Colonic mucosa (tissue), 4 donors: ENCODE measurements at regions of chr9 and their contacts with region 1.

Region 1: GRCh38 chr9:20356403-20357035 is 265.8 kb downstream of the MLLT3 start:
- DNase-seq: peak; percentile 77
- H3K4me3 ChIP-seq: no peak overlapping the region
- H3K27ac ChIP-seq: peak overlapping the region; percentile 26
- H3K4me1 ChIP-seq: no peaks in the 10 kb centered on the region
- H3K27me3 ChIP-seq: no peaks in the 10 kb centered on the region
- CTCF ChIP-seq: peak; percentile 54

Region 2: DNA sequence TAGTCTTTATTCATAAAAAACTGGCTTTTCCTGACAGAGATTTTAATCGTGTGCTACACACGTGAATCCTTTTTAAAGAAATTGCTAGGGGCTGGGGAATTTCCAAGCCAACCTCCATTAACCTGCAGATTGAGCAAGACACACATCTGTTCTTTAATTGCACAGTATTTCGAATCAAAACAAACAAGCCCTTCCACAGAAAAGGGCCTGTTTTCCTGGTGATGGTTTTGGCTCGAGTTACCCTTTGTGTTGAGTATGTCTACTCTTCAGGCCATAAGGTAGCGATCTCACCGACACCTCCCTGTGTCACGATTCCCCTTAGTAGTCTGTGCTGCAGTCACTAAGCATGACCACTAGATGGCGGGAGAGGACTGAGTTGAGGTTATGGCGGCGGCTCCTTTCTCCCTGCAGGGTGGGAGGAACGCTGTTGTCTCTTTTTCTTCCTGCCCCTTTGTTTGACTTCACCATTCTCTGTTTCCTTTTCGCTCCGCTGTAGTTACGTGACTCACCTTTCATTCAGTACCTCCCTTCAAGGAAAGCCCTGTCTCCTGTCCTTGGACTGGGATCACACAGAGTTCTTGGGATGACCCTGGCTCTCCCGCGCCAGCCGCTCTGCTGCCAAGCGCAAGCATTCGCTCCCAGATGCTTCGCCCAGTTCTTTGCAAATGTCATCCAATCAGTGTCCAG is 430.6 kb before region 1 on chr9:
- intact Hi-C with region 1: loop called (anchors 10 kb)
- DNase-seq: peak; percentile 79
- H3K4me3 ChIP-seq: peak overlapping the region; percentile 14
- H3K27ac ChIP-seq: no peak overlapping the region
- H3K4me1 ChIP-seq: no peaks in the 10 kb centered on the region
- H3K27me3 ChIP-seq: no peaks in the 10 kb centered on the region
- CTCF ChIP-seq: peak; percentile 90

Region 3: DNA sequence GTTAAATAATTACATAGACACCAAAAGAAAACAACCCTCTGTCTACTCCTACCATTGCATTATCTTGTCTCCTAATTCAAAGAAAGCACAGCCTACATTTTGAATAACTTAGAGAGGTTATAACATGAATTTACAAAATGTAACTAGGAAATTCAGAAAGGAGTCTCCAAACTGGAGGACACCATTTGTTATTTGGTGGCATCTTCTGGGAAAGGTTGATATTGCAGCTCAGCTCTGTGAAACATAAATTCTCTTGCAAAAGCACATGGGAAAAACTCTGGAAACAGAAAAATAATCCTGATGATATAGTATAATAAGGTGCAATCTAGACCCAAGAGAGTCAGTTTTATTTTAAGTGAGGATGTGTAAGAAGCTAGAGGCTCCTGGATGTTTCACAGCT is 50.5 kb after region 1 on chr9:
- intact Hi-C with region 1: no loop called
- DNase-seq: no peak
- H3K4me3 ChIP-seq: no peak overlapping the region
- H3K27ac ChIP-seq: peak overlapping the region; percentile 73
- H3K4me1 ChIP-seq: no peaks in the 10 kb centered on the region
- H3K27me3 ChIP-seq: no peaks in the 10 kb centered on the region
- CTCF ChIP-seq: no peak

Region 4: GRCh38 chr9:20426019-20426418 is 69.5 kb after region 1 on chr9:
- intact Hi-C with region 1: no loop called
- DNase-seq: no peak
- H3K4me3 ChIP-seq: no peak overlapping the region
- H3K27ac ChIP-seq: no peak overlapping the region
- H3K4me1 ChIP-seq: no peaks in the 10 kb centered on the region
- H3K27me3 ChIP-seq: no peaks in the 10 kb centered on the region
- CTCF ChIP-seq: no peak

Region 5: GRCh38 chr9:20622330-20623020 is 266.0 kb after region 1 on chr9 and contains the start of gene MLLT3:
- intact Hi-C with region 1: loop called (anchors 5 kb)
- DNase-seq: peak; percentile 98
- H3K4me3 ChIP-seq: peak within 1 kb of the TSS; percentile 76
- H3K27ac ChIP-seq: peak within 1 kb of the TSS; percentile 93
- H3K4me1 ChIP-seq: peaks cover 5% of the 10 kb centered on the region
- H3K27me3 ChIP-seq: no peaks in the 10 kb centered on the region
- CTCF ChIP-seq: no peak
- total RNA-seq, gene MLLT3: 44.6 to 65.2 TPM

Region 6: GRCh38 chr9:20854444-20854843 is 497.9 kb after region 1 on chr9:
- intact Hi-C with region 1: no loop called
- DNase-seq: no peak
- H3K4me3 ChIP-seq: no peak overlapping the region
- H3K27ac ChIP-seq: no peak overlapping the region
- H3K4me1 ChIP-seq: no peaks in the 10 kb centered on the region
- H3K27me3 ChIP-seq: no peaks in the 10 kb centered on the region
- CTCF ChIP-seq: no peak

Region 7: DNA sequence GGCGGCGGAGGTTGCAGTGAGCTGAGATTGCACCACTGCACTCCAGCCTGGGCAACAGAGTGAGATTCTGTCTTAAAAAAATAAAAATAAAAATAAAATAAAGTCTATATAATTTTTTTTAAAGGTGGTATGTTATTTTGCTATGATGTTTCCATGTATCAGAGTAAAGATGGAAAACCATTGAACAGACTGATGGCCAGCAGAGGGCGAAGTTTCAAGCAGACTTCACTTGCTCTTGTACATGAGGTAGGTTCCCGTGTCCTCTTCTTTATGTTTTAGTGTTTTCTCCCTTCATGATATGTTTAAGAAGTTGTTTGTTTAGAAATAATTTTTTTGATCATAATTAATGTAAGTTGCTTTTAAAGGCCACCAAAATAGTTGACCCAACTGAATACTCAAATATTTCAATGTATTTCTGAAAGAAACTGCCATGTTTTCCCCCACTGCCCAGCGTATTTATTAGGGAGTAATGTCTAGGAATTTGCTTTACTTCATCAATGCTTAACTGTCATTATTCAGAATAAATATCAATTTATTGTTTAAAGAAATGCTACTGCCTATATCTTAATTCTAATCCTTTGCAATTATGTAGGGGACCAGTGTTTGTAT is 528.6 kb after region 1 on chr9:
- intact Hi-C with region 1: loop called (anchors 5 kb)
- DNase-seq: peak; percentile 59
- H3K4me3 ChIP-seq: no peak overlapping the region
- H3K27ac ChIP-seq: no peak overlapping the region
- H3K4me1 ChIP-seq: no peaks in the 10 kb centered on the region
- H3K27me3 ChIP-seq: no peaks in the 10 kb centered on the region
- CTCF ChIP-seq: peak; percentile 69

Region 8: GRCh38 chr9:20941174-20941690 is 584.7 kb after region 1 on chr9:
- intact Hi-C with region 1: loop called (anchors 5 kb)
- DNase-seq: peak; percentile 57
- H3K4me3 ChIP-seq: no peak overlapping the region
- H3K27ac ChIP-seq: no peak overlapping the region
- H3K4me1 ChIP-seq: no peaks in the 10 kb centered on the region
- H3K27me3 ChIP-seq: no peaks in the 10 kb centered on the region
- CTCF ChIP-seq: peak; percentile 70